ENCODE measurements at regions of chr12 and their contacts with region 1.

Region 1: GRCh38 chr12:110100315-110100970 is 23.7 kb upstream of the IFT81 start:
- DNase-seq: peak; percentile 39
- H3K4me3 Mint-ChIP-seq: no peak overlapping the region
- H3K27ac Mint-ChIP-seq: no peak overlapping the region
- H3K4me1 Mint-ChIP-seq: peaks cover 9% of the 10 kb centered on the region
- H3K27me3 Mint-ChIP-seq: no peaks in the 10 kb centered on the region

Region 2: DNA sequence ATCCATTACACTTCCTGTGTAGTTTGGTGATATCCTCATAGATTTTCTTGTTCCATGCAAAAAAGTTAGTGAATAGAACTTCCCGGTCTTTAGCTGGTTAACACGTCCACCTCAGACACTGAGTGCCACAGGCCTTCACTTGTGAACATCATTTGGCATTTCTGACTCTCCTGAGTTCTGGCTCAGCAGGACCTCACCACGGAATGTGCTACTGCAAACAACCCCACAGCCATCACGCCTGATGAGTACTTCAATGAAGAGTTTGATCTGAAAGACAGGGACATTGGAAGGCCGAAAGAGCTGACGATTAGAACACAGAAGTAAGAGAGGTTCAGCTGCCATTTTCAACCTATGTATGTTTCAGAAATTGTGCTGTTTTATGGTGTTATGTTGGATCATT is 72.1 kb before region 1 on chr12:
- intact Hi-C with region 1: no loop called
- DNase-seq: no peak
- H3K4me3 Mint-ChIP-seq: no peak overlapping the region
- H3K27ac Mint-ChIP-seq: peak overlapping the region; percentile 44
- H3K4me1 Mint-ChIP-seq: peaks cover 33% of the 10 kb centered on the region
- H3K27me3 Mint-ChIP-seq: no peaks in the 10 kb centered on the region

Region 3: GRCh38 chr12:110048242-110049027 is 52.0 kb before region 1 on chr12 and contains the start of gene C12orf76:
- intact Hi-C with region 1: loop called (anchors 1 kb)
- DNase-seq: peak; percentile 89
- H3K4me3 Mint-ChIP-seq: peak within 1 kb of the TSS; percentile 84
- H3K27ac Mint-ChIP-seq: peak within 1 kb of the TSS; percentile 91
- H3K4me1 Mint-ChIP-seq: peaks cover 34% of the 10 kb centered on the region
- H3K27me3 Mint-ChIP-seq: no peaks in the 10 kb centered on the region
- total RNA-seq, gene C12orf76: 20.3 and 20.8 TPM in 2 replicates

Region 4: DNA sequence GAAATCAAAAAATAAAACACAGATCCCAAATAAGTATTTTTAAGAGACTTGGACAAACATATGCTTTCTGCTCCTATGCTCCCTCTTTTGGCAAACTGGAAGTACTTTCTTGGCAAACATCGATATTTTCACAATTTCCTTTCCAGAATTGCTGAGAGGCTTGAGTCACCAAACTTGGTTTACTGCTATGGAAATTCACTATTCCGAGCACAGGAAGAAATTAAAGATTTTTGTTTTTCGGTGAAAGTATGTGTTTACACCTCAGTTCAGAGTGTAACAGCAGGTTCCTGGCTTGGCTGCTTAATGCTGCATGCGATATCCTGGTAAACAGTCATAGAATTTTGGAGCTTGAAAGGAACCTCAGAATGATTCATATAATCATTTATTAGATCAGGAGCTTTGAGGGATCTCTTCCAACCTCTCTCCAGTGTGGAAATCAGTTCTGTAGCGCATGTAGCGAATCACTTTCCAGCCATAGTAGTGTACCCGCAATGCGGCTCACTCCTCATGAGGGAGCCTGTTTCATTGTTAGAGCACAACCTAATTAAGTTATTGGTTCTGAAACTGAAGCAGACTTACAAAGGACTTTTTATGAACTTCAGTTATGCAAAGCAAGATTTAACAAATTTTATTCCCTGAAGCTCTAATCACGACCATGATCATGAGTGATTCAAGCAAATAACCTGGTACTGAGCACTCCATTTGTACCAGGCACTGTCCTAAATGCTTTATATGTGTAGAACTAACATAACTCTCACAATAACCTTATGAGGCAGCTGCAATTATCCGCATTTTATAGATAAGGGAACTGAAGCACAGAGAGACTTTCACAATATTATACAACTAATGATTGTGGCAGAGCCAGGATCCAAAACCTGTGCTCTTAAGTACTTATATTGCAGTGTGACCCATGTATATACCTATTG is 124.2 kb after region 1 on chr12:
- intact Hi-C with region 1: loop called (anchors 1 kb)
- DNase-seq: no peak
- H3K4me3 Mint-ChIP-seq: no peak overlapping the region
- H3K27ac Mint-ChIP-seq: no peak overlapping the region
- H3K4me1 Mint-ChIP-seq: no peaks in the 10 kb centered on the region
- H3K27me3 Mint-ChIP-seq: peaks cover 7% of the 10 kb centered on the region

Region 5: DNA sequence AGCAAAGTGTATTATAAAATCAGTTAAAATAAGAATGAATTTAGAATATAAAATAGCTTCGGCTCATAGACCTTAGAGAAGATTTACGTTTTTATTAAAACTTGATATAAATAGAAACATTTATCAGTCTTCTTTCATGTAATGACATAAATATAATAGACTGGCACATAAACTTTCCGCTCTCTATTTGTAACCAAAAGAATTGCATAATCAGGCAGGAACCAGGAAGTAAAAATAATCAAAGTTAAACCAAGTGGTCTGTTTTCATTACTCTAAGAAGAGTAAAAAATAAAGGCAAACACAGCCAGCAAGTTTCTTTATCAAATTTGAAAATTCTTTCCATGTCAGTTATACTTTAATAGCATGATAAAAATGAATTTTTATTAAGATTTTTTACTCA is 134.3 kb after region 1 on chr12:
- intact Hi-C with region 1: no loop called
- DNase-seq: no peak
- H3K4me3 Mint-ChIP-seq: no peak overlapping the region
- H3K27ac Mint-ChIP-seq: no peak overlapping the region
- H3K4me1 Mint-ChIP-seq: no peaks in the 10 kb centered on the region
- H3K27me3 Mint-ChIP-seq: peaks cover 7% of the 10 kb centered on the region

Region 6: GRCh38 chr12:110245369-110245772 is 144.9 kb after region 1 on chr12:
- intact Hi-C with region 1: loop called (anchors 1 kb)
- DNase-seq: peak; percentile 11
- H3K4me3 Mint-ChIP-seq: no peak overlapping the region
- H3K27ac Mint-ChIP-seq: no peak overlapping the region
- H3K4me1 Mint-ChIP-seq: no peaks in the 10 kb centered on the region
- H3K27me3 Mint-ChIP-seq: peaks cover 2% of the 10 kb centered on the region

Region 7: GRCh38 chr12:111558107-111558376 is 1457.6 kb after region 1 on chr12:
- intact Hi-C with region 1: no loop called
- DNase-seq: no peak
- H3K4me3 Mint-ChIP-seq: no peak overlapping the region
- H3K27ac Mint-ChIP-seq: no peak overlapping the region
- H3K4me1 Mint-ChIP-seq: peaks cover 11% of the 10 kb centered on the region
- H3K27me3 Mint-ChIP-seq: no peaks in the 10 kb centered on the region